T-cell (primary cell): ENCODE measurements at regions of chr5 and their contacts with region 1.

Region 1: DNA sequence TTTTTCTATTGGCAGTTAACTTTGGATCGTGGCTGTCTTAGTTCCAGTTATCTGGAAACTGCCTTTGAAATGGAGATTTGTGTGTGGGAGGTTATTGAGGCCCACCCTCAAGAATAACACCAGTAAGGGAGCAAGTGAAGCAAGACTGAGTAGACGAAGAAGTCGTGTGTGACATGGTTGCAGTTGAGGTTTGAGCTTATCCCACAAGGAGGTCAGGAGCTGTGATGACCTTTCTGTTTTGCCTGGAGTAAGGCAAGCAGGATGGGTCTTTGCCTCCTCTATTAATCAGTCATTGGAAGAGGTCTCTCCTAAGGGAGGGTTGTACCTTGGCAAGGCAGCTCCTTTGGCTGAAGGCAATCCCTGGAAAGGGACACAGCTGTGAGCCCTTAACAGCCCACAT is 49.6 kb upstream of the CTXN3 start:
- DNase-seq: no peak
- ATAC-seq: no peak
- H3K4me3 ChIP-seq: no peak overlapping the region
- H3K4me3 Mint-ChIP-seq: no peak overlapping the region
- H3K27ac ChIP-seq: no peak overlapping the region
- H3K27ac Mint-ChIP-seq: no peak overlapping the region
- H3K4me1 ChIP-seq: peaks cover 0 to 18% of the 10 kb centered on the region in 2 experiments
- H3K4me1 Mint-ChIP-seq: peaks cover 9 to 25% (median 11%) of the 10 kb centered on the region in 3 donors
- H3K27me3 ChIP-seq: peaks cover 0 to 2% of the 10 kb centered on the region in 2 experiments
- H3K27me3 Mint-ChIP-seq: peaks cover 6 to 8% of the 10 kb centered on the region in 2 donors

Region 2: GRCh38 chr5:127471211-127471610 is 128.1 kb before region 1 on chr5:
- CTCF ChIA-PET with region 1: no interaction called
- POLR2A ChIA-PET with region 1: no interaction called
- DNase-seq: no peak
- ATAC-seq: no peak
- H3K4me3 ChIP-seq: no peak overlapping the region
- H3K4me3 Mint-ChIP-seq: no peak overlapping the region
- H3K27ac ChIP-seq: no peak overlapping the region
- H3K27ac Mint-ChIP-seq: no peak overlapping the region
- H3K4me1 ChIP-seq: no peaks in the 10 kb centered on the region
- H3K4me1 Mint-ChIP-seq: no peaks in the 10 kb centered on the region
- H3K27me3 ChIP-seq: no peaks in the 10 kb centered on the region
- H3K27me3 Mint-ChIP-seq: peaks cover 13 to 14% of the 10 kb centered on the region in 2 donors

Region 3: DNA sequence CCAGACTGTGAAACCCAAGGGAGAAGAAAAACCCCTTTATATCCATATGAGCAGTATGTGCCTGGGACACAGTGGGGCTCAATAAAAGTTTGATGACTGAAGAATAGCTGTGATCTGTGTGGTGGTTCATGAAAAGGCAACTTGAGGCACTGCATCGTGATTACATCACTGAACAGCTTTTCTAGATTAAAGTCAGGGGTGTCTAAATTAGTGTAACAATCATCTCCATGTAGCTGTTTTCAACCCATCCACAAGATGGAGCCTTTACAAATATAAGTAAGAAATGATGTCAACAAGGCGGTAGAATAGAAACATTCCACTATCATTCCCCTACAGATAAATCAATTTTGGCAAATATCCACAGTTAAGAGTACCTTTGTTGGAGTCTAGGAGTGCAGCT is 26.4 kb before region 1 on chr5:
- CTCF ChIA-PET with region 1: no interaction called
- POLR2A ChIA-PET with region 1: no interaction called
- DNase-seq: no peak
- ATAC-seq: no peak
- H3K4me3 ChIP-seq: no peak overlapping the region
- H3K4me3 Mint-ChIP-seq: no peak overlapping the region
- H3K27ac ChIP-seq: no peak overlapping the region
- H3K27ac Mint-ChIP-seq: no peak overlapping the region
- H3K4me1 ChIP-seq: no peaks in the 10 kb centered on the region
- H3K4me1 Mint-ChIP-seq: peaks cover 0 to 4% (median 3%) of the 10 kb centered on the region in 3 donors
- H3K27me3 ChIP-seq: peaks cover 0 to 5% of the 10 kb centered on the region in 2 experiments
- H3K27me3 Mint-ChIP-seq: peaks cover 9 to 23% of the 10 kb centered on the region in 2 donors

Region 4: DNA sequence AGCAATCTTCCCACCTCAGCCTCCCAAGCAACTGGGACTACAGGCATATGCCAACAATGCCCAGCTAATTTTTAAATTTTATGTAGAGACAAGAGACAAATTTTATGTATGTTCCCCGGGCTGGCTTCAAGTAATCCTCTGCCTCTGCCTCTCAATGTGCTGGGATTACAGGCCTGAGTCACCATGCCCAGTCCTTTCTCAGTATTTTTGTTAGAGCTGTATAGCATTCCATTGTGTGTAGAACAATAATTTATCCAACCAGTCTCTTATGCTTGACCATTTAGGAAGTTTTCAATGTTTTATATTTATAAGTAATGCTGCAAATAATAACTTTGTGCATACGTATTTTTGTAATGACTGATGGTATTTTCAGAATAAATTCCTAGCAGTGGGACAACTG is 10.6 kb after region 1 on chr5:
- CTCF ChIA-PET with region 1: no interaction called
- POLR2A ChIA-PET with region 1: interaction called in 1 of 2 experiments, 13 read pairs
- DNase-seq: no peak
- ATAC-seq: no peak
- H3K4me3 ChIP-seq: no peak overlapping the region
- H3K4me3 Mint-ChIP-seq: no peak overlapping the region
- H3K27ac ChIP-seq: no peak overlapping the region
- H3K27ac Mint-ChIP-seq: no peak overlapping the region
- H3K4me1 ChIP-seq: no peaks in the 10 kb centered on the region
- H3K4me1 Mint-ChIP-seq: no peaks in the 10 kb centered on the region
- H3K27me3 ChIP-seq: no peaks in the 10 kb centered on the region
- H3K27me3 Mint-ChIP-seq: peaks cover 0 to 7% of the 10 kb centered on the region in 2 donors

Region 5: DNA sequence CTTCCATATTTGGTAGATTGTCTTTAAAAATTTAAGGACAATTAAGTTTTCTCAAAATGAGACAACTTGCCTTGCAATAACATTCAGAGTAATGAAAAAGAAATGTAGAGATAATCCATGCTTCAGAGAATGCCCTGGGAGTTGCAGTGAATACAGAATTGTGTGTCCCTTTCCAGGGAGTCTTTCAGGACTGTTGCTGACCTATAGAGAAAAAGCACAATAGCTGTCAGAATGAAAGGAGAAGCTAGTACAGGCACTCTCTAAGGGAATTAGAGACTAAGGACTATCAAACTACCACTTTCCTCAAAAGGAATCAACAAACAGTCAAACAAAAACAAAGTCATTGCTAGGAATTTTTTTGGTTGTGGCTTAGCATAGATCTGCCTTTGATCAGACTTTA is 196.9 kb after region 1 on chr5:
- CTCF ChIA-PET with region 1: no interaction called
- POLR2A ChIA-PET with region 1: no interaction called
- DNase-seq: no peak
- ATAC-seq: no peak
- H3K4me3 ChIP-seq: no peak overlapping the region
- H3K4me3 Mint-ChIP-seq: no peak overlapping the region
- H3K27ac ChIP-seq: no peak overlapping the region
- H3K27ac Mint-ChIP-seq: no peak overlapping the region
- H3K4me1 ChIP-seq: no peaks in the 10 kb centered on the region
- H3K4me1 Mint-ChIP-seq: no peaks in the 10 kb centered on the region
- H3K27me3 ChIP-seq: no peaks in the 10 kb centered on the region
- H3K27me3 Mint-ChIP-seq: no peaks in the 10 kb centered on the region